Cardiac septum (tissue), 1 donor: ENCODE measurements at regions of chr3 and their contacts with region 1.

Region 1: GRCh38 chr3:26712211-26713026 is 89.8 kb downstream of the LRRC3B start:
- DNase-seq: no peak

Region 2: DNA sequence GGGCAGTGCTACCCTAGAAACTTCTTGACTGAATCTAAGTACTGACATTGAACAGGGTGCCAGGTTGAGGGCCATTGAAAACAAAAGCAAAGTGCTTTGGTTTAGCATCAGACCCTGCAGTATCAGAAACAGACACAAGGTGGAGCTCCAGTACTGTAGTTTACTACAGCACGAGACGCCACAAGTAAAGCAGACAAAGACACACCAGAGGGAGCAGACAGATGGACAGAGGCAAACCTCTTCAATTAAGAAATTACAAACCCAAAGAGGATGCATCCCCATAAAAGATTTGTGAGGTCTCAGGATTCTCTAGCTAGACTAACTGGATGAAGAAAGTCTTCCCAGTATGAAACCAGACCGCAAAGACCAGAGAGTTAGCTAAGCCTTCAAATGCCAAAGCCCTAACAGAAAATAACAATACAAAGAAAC is 1064.3 kb before region 1 on chr3:
- intact Hi-C with region 1: loop called (anchors 10 kb)
- DNase-seq: peak; percentile 73

Region 3: DNA sequence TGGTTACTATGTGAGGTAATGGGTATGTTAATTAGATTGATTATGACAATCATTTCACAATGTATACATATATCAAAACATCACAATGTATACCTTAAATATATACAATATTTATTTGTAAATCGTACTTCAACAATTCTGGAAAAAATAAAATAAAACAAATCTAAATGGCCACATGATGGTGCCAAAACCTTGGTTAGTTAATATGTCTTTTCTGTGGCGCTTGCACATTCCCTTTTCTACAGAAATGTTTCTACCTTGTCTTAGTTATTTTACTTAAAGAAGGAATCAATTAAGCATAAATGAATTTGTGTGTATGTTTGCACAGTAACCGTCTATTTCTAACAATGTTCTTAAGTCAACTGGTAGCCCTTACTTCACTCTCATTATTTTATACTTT is 869.1 kb before region 1 on chr3:
- intact Hi-C with region 1: loop called (anchors 5 kb)
- DNase-seq: no peak

Region 4: GRCh38 chr3:25904206-25904605 is 808.2 kb before region 1 on chr3:
- intact Hi-C with region 1: loop called (anchors 2 kb)
- DNase-seq: no peak

Region 5: DNA sequence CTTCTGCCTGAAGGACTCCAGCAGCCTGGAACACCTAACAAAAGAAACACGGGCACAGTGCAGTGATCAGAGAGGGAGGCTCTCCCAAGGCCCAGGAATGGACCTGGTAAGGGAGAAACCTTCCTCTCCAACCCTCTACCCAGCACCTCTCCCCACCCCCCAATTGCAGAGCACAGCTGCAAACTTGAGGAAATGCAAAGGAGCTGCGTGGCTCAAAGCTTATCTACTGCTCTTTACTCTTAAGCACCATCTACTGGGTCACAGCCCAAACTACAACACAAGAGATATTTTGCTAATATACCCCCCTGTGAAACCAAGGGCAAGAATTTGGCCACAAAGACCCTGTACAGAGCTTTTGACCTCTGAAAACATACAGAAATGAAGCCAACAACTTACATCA is 594.3 kb before region 1 on chr3:
- intact Hi-C with region 1: loop called (anchors 10 kb)
- DNase-seq: no peak